ENCODE measurements at regions of chr20 and their contacts with region 1.

Region 1: DNA sequence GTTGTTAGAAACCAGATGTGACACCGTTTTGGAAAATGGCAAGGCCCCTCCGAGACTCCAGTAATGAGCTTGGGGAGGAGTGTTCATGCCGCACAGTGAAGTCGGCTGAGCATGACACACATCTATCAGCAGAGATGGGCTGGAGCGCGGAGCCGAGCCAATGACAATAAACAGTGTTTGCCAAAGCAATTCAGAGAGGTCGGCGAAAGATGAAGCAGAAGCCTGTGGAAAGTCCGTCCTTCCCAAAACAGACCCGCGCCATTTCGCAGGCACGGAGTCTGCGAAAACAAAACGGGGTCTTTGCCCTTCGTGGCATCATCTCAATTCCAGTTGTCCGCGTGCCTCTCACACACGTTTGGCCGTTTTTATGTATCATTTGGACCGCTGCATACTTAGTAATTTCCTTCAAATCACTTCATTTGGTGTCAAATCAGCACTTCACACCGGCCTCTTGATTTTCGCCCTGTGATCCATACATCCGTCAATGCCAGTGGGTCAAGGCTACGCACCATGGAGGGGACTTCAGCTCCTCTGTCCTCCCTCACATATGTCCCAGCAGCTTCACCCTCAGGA is 71.3 kb downstream of the SULF2 start:
- DNase-seq: no peak
- ATAC-seq: no peak
- H3K4me3 ChIP-seq: no peak overlapping the region
- H3K27ac ChIP-seq: no peak overlapping the region
- H3K4me1 ChIP-seq: no peaks in the 10 kb centered on the region
- H3K27me3 ChIP-seq: peaks cover 40 to 72% of the 10 kb centered on the region in 2 experiments
- CTCF ChIP-seq: no peak
- EP300 ChIP-seq: no peak
- POLR2A ChIP-seq: no peak
- RAD21 ChIP-seq: no peak

Region 2: DNA sequence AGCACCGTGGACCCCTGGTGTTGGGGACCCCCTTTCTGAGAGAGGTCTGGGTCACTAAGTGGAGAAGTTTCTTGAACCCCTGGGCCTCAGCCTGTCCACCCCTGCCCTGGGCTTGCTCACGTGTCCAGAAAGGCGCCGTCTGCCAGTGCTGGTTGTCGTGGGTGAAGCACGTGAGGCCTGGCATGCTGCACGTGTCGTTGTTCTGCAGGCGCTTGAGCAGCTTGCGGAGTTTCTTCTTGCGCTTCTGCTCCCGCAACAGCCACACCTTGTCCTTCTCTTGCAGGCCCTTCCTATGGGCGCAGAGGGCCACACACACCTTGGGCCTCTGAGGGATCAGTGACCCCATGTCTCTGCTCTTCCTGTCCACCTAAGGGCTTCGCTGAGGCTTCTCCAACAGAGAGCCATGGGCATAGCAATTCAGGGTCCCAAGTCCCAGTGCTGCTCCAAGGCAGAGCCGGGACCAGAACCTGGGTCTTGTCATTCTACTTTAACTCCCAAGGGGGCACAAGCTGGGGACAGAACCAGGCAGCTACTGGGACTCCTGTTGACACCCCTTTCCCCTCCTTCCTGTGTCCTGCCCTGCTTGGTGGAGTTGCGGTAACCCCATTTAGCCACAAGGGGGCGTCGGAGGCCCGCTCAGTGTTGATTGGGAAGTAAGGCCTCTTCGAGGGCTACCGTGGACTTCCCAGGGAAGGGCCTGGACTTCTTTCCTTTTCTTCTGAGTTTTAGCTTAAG is 50.5 kb before region 1 on chr20:
- CTCF ChIA-PET with region 1: no interaction called
- POLR2A ChIA-PET with region 1: no interaction called
- in situ Hi-C with region 1: no loop called
- intact Hi-C with region 1: loop called (anchors 5 kb)
- DNase-seq: peak; percentile 81 to 85 (median 82)
- ATAC-seq: peak; percentile 89
- H3K4me3 ChIP-seq: no peak overlapping the region
- H3K27ac ChIP-seq: no peak overlapping the region
- H3K4me1 ChIP-seq: peaks cover 0 to 11% of the 10 kb centered on the region in 2 experiments; a peak in 3 of 5 replicates
- H3K27me3 ChIP-seq: peaks cover 36 to 40% of the 10 kb centered on the region in 2 experiments
- CTCF ChIP-seq: peak; percentile 88 to 97 (median 89)
- EP300 ChIP-seq: no peak
- POLR2A ChIP-seq: no peak
- RAD21 ChIP-seq: peak; percentile 62 to 77